Activated CD4-positive, alpha-beta memory T cell treated with anti-CD3 and anti-CD28 coated beads for 36 hours (primary cell): ENCODE measurements at regions of chr4 and their contacts with region 1.

Region 1: GRCh38 chr4:80184053-80184790 is 13.1 kb upstream of the PRDM8 start:
- DNase-seq: peak; percentile 94
- H3K4me3 Mint-ChIP-seq: peak overlapping the region; percentile 88
- H3K27ac Mint-ChIP-seq: peak overlapping the region; percentile 85
- H3K4me1 Mint-ChIP-seq: peaks cover 46% of the 10 kb centered on the region
- H3K27me3 Mint-ChIP-seq: peaks cover 7% of the 10 kb centered on the region

Region 2: DNA sequence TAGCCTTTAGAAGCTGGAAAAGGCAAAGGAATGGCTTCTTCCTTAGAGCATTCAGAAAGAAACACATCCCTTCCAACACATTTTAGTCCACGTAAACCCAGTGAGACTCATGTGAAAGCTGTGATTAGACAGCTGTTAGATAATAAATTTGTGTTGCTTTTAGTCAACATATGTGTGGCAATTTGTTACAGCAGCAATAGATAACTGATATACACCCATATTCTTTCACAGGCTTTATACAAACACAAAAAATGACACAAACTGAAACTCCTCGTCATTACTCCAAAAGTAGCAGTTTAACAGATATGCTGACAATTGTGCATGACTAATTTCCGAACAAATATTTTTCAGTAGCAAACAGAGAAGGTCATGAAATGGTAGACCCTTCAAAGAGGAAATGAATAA is 176.5 kb before region 1 on chr4:
- CTCF ChIA-PET with region 1: no interaction called
- POLR2A ChIA-PET with region 1: no interaction called
- intact Hi-C with region 1: loop called (anchors 1 kb)
- DNase-seq: no peak
- H3K4me3 Mint-ChIP-seq: peak overlapping the region; percentile 20
- H3K27ac Mint-ChIP-seq: peak overlapping the region; percentile 87
- H3K4me1 Mint-ChIP-seq: peaks cover 64% of the 10 kb centered on the region
- H3K27me3 Mint-ChIP-seq: no peaks in the 10 kb centered on the region

Region 3: DNA sequence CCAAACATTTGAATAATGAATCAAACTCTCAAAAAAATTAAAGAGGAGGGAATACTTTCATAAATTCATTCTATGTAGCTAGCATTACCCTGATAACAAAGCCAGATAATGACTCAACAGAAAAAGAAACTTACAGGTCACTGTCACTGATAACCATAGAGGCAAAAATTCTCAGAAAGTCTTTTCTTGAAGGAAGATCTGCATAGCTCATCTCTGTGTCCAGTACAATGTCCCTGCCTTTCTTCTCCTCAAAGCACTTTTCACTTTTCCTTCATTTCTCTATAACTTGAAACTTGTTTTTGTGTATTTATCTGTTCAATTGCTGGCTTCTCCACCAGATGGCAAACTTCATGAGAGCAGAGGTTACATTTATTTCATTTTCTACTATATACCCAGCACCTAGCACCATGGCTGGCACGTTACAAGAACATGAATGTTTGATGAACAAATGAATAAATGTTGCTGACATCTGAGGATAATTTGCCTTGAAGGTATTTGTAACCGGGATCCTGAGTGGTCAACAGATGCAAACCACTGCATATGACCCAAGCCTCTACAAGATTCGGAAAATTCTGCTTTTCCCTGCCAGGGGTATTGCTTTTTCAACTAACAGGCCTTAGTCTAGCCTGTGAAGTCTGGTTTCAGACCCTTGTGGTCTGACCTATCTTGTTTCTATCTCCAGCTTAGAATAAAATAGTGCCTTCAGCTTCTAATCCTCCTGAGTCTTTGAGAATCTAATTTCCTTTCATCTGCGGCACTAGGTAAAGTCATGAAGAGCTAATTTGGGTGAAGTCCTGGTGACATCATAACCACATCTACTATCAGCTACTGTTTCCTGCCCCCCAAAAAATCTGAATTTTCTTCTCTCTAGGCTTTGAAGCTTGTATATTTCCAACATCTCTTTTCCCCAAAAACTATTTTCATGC is 58.7 kb before region 1 on chr4:
- CTCF ChIA-PET with region 1: interaction called, 77 read pairs
- POLR2A ChIA-PET with region 1: no interaction called
- intact Hi-C with region 1: loop called (anchors 1 kb)
- DNase-seq: peak; percentile 31
- H3K4me3 Mint-ChIP-seq: peak overlapping the region; percentile 28
- H3K27ac Mint-ChIP-seq: peak overlapping the region; percentile 70
- H3K4me1 Mint-ChIP-seq: peaks cover 49% of the 10 kb centered on the region
- H3K27me3 Mint-ChIP-seq: no peaks in the 10 kb centered on the region

Region 4: GRCh38 chr4:80153874-80154544 is 30.2 kb before region 1 on chr4:
- CTCF ChIA-PET with region 1: interaction called, 18 read pairs
- POLR2A ChIA-PET with region 1: no interaction called
- intact Hi-C with region 1: loop called (anchors 1 kb)
- DNase-seq: no peak
- H3K4me3 Mint-ChIP-seq: peak overlapping the region; percentile 6
- H3K27ac Mint-ChIP-seq: peak overlapping the region; percentile 52
- H3K4me1 Mint-ChIP-seq: peaks cover 20% of the 10 kb centered on the region
- H3K27me3 Mint-ChIP-seq: no peaks in the 10 kb centered on the region

Region 5: DNA sequence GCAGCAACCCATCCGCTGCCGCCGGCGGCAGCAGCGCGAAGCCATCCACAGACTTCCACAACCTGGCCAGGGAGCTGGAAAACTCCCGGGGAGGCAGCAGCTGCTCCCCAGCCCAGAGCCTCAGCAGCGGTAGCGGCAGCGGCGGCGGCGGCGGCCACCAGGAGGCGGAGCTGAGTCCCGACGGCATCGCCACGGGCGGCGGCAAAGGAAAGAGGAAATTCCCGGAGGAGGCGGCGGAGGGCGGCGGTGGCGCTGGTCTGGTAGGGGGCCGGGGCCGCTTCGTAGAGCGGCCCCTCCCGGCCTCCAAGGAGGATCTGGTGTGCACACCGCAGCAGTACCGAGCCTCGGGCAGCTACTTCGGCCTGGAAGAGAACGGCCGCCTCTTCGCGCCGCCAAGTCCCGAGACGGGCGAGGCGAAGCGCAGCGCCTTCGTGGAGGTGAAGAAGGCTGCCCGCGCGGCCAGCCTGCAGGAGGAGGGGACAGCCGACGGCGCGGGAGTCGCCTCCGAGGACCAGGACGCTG is 18.0 kb after region 1 on chr4:
- CTCF ChIA-PET with region 1: interaction called, 93 read pairs
- POLR2A ChIA-PET with region 1: interaction called, 8 read pairs
- intact Hi-C with region 1: loop called (anchors 1 kb)
- DNase-seq: peak; percentile 86
- H3K4me3 Mint-ChIP-seq: peak overlapping the region; percentile 73
- H3K27ac Mint-ChIP-seq: peak overlapping the region; percentile 78
- H3K4me1 Mint-ChIP-seq: peaks cover 22% of the 10 kb centered on the region
- H3K27me3 Mint-ChIP-seq: peaks cover 6% of the 10 kb centered on the region

Region 6: DNA sequence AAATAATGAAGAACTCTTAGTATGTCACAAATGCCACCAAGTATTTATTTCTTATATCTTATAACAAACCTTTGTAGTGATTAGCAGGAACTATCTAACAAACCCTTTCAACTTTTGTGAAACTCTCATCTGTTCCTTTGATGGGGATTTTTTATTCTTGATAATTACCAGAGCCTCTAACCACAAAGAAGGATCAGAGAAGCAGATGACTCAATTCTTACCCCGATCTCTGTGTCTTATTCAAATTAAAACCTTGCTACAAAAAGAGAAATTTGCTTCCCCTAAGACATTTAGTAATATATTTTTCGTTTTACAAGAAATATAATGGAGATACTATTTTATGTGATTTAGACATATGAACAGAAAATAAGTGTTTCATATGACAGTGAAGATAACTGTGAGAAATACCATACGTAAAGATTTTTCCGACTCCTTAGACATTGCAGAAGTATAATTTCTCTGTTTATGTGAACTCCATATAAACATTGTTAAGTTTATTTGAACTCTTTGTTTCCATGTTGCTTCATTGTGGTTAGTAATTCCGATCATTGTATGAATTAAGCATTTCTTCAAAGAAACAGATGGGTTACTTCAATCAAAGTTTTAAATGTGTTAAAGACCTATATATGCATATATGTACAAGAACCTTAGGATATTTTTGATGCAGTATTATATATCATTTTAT is 356.7 kb after region 1 on chr4:
- CTCF ChIA-PET with region 1: no interaction called
- POLR2A ChIA-PET with region 1: no interaction called
- intact Hi-C with region 1: loop called (anchors 5 kb)
- DNase-seq: no peak
- H3K4me3 Mint-ChIP-seq: no peak overlapping the region
- H3K27ac Mint-ChIP-seq: no peak overlapping the region
- H3K4me1 Mint-ChIP-seq: peaks cover 23% of the 10 kb centered on the region
- H3K27me3 Mint-ChIP-seq: peaks cover 34% of the 10 kb centered on the region